Heart left ventricle (tissue), 16 donors: ENCODE measurements at regions of chr5 and their contacts with region 1.

Region 1: DNA sequence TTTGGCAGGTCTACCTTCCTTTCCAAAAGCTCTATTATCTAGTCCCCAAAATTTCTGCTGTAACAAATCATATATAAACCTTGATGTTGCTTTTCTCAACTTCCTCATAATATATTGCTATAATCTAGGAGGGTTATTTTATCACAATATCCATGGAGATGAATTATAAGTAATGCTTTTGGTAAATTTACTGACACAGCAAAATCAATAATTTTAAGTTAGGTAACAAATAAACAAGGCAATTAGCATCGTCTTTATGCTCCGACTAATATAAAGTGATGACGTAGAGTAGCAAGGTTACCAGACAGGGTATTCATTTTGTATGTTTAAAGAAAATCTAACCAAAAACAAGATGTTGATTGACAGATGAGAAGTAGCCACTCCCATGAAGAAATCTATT is 132.3 kb upstream of the ST8SIA4 start:
- DNase-seq: no peak
- ATAC-seq: no peak
- H3K4me3 ChIP-seq: no peak overlapping the region
- H3K27ac ChIP-seq: no peak overlapping the region
- H3K4me1 ChIP-seq: peaks cover 0 to 3% (median 0%) of the 10 kb centered on the region in 12 donors
- H3K27me3 ChIP-seq: no peaks in the 10 kb centered on the region
- CTCF ChIP-seq: no peak
- POLR2A ChIP-seq: no peak

Region 2: DNA sequence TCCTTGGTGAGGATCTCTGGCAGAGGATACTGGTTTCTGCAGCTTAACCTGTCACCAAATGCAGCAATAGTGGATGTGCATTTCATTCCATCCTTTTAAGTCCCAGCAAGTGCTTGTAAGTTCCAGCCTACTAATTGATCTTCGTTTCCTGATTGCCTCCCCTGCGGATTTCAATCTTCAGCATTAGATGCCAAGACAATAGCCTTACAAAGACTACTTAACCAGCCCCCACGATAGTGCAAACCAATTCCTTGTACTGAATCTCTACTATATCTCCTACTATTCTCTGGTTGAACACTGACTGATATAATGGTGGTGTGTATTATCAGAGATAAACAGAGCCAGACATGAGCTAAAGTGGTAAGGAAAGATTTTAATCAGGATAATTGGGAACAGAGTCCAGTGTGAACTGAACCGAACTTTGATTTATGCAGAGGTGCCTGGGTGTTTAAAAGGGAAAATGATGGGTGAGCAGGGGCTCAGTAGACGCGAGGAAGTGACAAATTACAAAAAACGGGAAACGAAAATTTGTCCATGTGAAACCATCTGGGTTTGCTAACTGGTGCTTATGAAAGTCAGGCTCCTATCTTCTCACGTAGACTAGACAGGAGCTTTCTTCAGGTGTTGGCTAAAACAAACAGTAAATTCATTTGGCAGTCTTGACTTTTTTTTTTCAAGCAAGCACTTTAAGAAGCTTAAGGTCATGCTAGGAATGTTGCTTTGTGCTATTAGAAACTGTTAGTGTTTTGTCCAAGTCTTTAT is 25.5 kb before region 1 on chr5:
- intact Hi-C with region 1: loop called in 1 of 10 experiments (anchors 2 kb)
- DNase-seq: no peak
- ATAC-seq: no peak
- H3K4me3 ChIP-seq: no peak overlapping the region
- H3K27ac ChIP-seq: no peak overlapping the region
- H3K4me1 ChIP-seq: no peaks in the 10 kb centered on the region
- H3K27me3 ChIP-seq: no peaks in the 10 kb centered on the region
- CTCF ChIP-seq: no peak
- POLR2A ChIP-seq: no peak